Activated B cell treated with CpG ODN at 0.5 μM for 24 hours (primary cell): ENCODE measurements at regions of chr13 and their contacts with region 1.

Region 1: DNA sequence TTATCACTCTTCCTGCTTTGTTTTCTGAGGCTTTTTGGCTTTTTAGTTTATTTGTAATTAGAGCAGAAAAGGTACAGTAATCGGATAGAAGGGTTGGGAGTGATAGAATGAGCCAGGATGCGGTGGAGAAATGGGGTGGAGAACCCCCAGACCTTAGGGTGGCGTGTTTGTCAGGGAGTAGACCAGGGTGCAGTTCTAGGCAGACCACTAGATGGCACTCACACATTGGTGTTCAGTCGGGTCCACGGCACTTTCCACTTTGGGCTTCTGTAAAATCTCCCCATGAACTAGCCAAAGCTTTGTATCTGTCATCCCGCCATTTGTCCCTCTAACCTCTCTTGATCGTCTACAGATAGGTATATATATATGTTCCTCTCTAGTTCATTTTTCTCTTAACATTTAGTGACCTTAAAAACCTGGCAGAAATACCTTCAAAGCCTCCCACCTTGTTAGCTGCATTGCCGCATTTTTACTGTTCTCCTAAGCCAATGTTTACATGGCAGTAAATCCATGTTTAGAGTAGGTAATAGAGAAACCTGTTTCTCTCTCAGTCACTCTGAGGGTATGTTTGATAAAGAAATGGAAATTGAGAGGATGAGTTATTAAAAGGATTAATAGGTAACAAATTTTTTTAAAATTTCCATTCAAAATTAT is 154.9 kb downstream of the TM9SF2 start:
- DNase-seq: peak; percentile 54
- ATAC-seq: peak; percentile 85
- H3K4me3 Mint-ChIP-seq: peak overlapping the region; percentile 11
- H3K27ac Mint-ChIP-seq: no peak overlapping the region
- H3K4me1 Mint-ChIP-seq: peaks cover 24% of the 10 kb centered on the region
- H3K27me3 Mint-ChIP-seq: peaks cover 3% of the 10 kb centered on the region
- CTCF ChIP-seq: no peak

Region 2: DNA sequence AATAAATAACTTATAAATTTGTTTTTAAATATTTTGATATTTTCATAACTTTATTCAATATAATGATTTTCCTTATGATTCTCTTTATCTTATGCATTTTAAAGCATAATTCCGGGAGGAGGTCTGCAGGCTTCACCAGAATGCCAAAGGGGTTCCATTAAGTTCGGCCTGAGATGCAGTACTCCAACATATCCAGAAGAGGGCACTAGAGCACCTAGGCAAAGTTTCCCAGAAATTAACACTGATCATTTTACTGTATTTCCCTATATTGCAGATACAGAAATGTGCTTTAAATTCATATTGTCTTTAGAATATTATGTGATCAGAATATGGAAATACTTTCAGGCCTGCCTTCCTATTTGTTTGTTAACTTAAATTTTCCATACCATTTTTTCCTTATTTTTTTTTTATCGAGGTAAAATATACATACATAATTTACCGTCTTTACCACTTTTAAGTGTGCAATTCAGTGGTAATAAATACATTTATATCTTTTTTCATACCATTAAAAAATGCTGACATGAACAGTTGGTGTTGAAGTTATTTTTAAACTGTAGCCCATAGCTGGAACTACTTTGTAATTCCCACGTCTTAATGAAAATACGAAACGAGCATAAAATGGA is 213.8 kb before region 1 on chr13:
- CTCF ChIA-PET with region 1: no interaction called
- POLR2A ChIA-PET with region 1: no interaction called
- intact Hi-C with region 1: loop called (anchors 1 kb)
- DNase-seq: no peak
- ATAC-seq: peak; percentile 78
- H3K4me3 Mint-ChIP-seq: no peak overlapping the region
- H3K27ac Mint-ChIP-seq: no peak overlapping the region
- H3K4me1 Mint-ChIP-seq: peaks cover 16% of the 10 kb centered on the region
- H3K27me3 Mint-ChIP-seq: peaks cover 2% of the 10 kb centered on the region
- CTCF ChIP-seq: peak; percentile 99

Region 3: DNA sequence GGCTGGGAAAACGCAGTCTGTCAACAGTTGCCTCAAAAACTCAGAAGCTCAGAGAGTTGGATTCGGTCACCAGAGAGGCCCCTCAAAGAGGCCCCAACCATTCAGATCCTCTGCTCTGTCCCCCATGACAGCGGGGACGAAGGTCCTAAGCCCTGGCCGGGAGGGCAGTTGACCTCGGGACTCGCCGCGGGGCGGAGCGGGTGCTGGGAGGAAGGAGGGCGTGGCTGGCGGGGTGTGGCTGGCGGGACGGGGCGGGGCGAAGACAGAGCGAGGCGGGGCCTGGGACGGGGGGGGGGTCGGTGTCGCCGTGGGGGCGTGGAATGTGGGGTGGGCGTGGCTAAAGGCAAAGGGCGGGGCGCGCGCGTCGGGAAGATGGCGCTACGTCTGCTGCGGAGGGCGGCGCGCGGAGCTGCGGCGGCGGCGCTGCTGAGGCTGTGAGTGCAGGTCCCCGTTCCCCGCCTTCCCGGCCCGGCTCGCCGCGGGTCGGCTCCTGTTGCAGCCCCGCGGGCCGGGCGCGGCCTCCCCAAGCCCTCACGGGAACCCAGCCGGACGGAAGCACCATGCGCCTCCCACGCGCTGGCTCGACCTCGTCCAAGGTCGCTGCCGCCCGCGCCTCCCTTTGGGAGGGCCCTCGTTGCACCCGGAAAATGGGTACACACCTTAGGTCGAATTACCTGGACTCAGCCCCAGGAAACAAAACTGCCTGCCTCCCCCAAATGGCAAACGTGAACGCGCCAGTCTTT is 49.7 kb before region 1 on chr13:
- CTCF ChIA-PET with region 1: interaction called, 3 read pairs
- POLR2A ChIA-PET with region 1: no interaction called
- intact Hi-C with region 1: loop called (anchors 2 kb)
- DNase-seq: peak; percentile 86
- ATAC-seq: peak; percentile 91
- H3K4me3 Mint-ChIP-seq: peak within 1 kb of the TSS; percentile 91
- H3K27ac Mint-ChIP-seq: peak within 1 kb of the TSS; percentile 86
- H3K4me1 Mint-ChIP-seq: peaks cover 38% of the 10 kb centered on the region
- H3K27me3 Mint-ChIP-seq: no peaks in the 10 kb centered on the region
- CTCF ChIP-seq: no peak

Region 4: GRCh38 chr13:99980201-99980823 is 324.1 kb after region 1 on chr13:
- CTCF ChIA-PET with region 1: no interaction called
- POLR2A ChIA-PET with region 1: no interaction called
- intact Hi-C with region 1: loop called (anchors 5 kb)
- DNase-seq: no peak
- ATAC-seq: peak; percentile 75
- H3K4me3 Mint-ChIP-seq: no peak overlapping the region
- H3K27ac Mint-ChIP-seq: no peak overlapping the region
- H3K4me1 Mint-ChIP-seq: peaks cover 2% of the 10 kb centered on the region
- H3K27me3 Mint-ChIP-seq: peaks cover 54% of the 10 kb centered on the region
- CTCF ChIP-seq: no peak

Region 5: DNA sequence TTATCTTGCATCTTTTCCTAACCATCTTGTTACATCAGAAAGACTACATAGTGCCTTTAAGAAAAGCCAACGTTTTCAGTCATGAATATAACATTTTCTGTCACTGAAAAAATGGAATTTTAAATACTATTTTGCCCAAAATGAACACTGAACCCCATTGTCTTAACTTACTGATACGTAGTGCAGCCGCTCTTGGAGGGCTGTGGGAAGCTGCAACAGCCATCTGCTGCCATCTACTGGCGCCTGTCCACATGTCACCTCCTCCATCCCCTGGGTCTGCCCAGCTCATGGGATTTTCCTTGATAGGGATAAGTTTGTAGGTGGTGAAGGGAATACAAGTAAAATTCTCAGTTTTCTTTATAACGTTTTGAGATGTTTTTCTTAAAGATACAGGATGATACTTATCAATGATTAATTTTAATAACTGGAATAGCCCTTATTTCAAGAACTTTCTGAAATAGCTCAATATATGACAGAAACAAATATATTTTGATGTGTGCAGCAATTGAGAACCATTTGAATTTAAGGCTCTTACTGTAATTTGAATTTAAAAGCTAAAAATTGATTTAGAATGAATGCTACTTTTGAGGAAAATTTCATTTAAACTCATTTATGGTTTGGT is 858.7 kb after region 1 on chr13:
- CTCF ChIA-PET with region 1: interaction called, 69 read pairs
- POLR2A ChIA-PET with region 1: no interaction called
- intact Hi-C with region 1: loop called (anchors 1 kb)
- DNase-seq: peak; percentile 49
- ATAC-seq: peak; percentile 82
- H3K4me3 Mint-ChIP-seq: no peak overlapping the region
- H3K27ac Mint-ChIP-seq: no peak overlapping the region
- H3K4me1 Mint-ChIP-seq: peaks cover 2% of the 10 kb centered on the region
- H3K27me3 Mint-ChIP-seq: no peaks in the 10 kb centered on the region
- CTCF ChIP-seq: peak; percentile 78

Region 6: GRCh38 chr13:100588331-100589177 is 932.3 kb after region 1 on chr13 and contains the start of gene GGACT:
- CTCF ChIA-PET with region 1: no interaction called
- POLR2A ChIA-PET with region 1: no interaction called
- intact Hi-C with region 1: loop called (anchors 5 kb)
- DNase-seq: peak; percentile 80
- ATAC-seq: peak; percentile 95
- H3K4me3 Mint-ChIP-seq: peak within 1 kb of the TSS; percentile 80
- H3K27ac Mint-ChIP-seq: peak within 1 kb of the TSS; percentile 65
- H3K4me1 Mint-ChIP-seq: peaks cover 14% of the 10 kb centered on the region
- H3K27me3 Mint-ChIP-seq: no peaks in the 10 kb centered on the region
- CTCF ChIP-seq: no peak
- total RNA-seq, gene GGACT: 6.5 and 7.5 TPM in 2 replicates

Region 7: DNA sequence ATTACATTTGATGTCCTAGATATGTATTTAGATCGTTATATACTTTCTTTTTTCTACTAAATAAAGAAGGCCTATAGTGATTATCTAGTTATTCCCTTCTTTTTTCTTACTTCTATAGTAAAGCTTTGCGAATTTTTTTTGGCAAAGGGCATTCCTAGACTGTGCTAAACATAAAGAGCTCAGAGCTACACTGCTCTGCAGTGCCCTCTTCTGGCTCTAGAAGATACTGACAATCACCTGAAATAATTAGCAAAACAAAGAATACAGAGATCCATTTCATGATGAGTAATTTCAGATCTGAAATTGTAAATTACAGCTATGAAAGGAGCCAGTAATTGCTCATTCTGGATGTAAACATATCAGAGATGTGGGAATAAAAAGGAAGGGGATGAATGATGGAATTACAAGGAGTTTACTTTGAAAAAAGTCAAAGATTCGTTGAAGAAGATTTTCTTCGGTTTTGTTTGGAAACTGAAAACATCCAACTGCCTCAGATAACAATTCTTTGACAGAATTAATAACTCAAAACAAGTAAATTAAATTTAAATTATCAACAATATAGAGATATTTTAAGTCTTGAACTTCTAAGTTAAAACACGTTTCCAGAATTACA is 1471.6 kb after region 1 on chr13:
- CTCF ChIA-PET with region 1: no interaction called
- POLR2A ChIA-PET with region 1: no interaction called
- intact Hi-C with region 1: loop called (anchors 5 kb)
- DNase-seq: no peak
- ATAC-seq: peak; percentile 49
- H3K4me3 Mint-ChIP-seq: no peak overlapping the region
- H3K27ac Mint-ChIP-seq: no peak overlapping the region
- H3K4me1 Mint-ChIP-seq: no peaks in the 10 kb centered on the region
- H3K27me3 Mint-ChIP-seq: no peaks in the 10 kb centered on the region
- CTCF ChIP-seq: no peak

Region 8: GRCh38 chr13:101449971-101450748 is 1793.9 kb after region 1 on chr13:
- CTCF ChIA-PET with region 1: no interaction called
- POLR2A ChIA-PET with region 1: no interaction called
- intact Hi-C with region 1: no loop called
- DNase-seq: no peak
- ATAC-seq: no peak
- H3K4me3 Mint-ChIP-seq: no peak overlapping the region
- H3K27ac Mint-ChIP-seq: no peak overlapping the region
- H3K4me1 Mint-ChIP-seq: peaks cover 4% of the 10 kb centered on the region
- H3K27me3 Mint-ChIP-seq: peaks cover 8% of the 10 kb centered on the region
- CTCF ChIP-seq: no peak